ENCODE measurements at regions of chr1 and their contacts with region 1.

Region 1: GRCh38 chr1:23979878-23980724 is at the start of gene SRSF10:
- DNase-seq: peak; percentile 88 to 96
- H3K4me3 ChIP-seq: peak within 1 kb of the TSS; percentile 94
- H3K27ac ChIP-seq: peak within 1 kb of the TSS; percentile 97
- H3K4me1 ChIP-seq: peaks cover 45% of the 10 kb centered on the region
- H3K27me3 ChIP-seq: no peaks in the 10 kb centered on the region
- CTCF ChIP-seq: no peak
- total RNA-seq, gene SRSF10: 77.3 and 96.2 TPM in 2 replicates

Region 2: GRCh38 chr1:22995774-22996173 is 984.3 kb before region 1 on chr1:
- CTCF ChIA-PET with region 1: no interaction called
- POLR2A ChIA-PET with region 1: interaction called, 47 read pairs
- intact Hi-C with region 1: no loop called
- DNase-seq: no peak
- H3K4me3 ChIP-seq: no peak overlapping the region
- H3K27ac ChIP-seq: peak overlapping the region; percentile 93; the same call in 1 of the 2 replicates
- H3K4me1 ChIP-seq: peaks cover 37% of the 10 kb centered on the region
- H3K27me3 ChIP-seq: no peaks in the 10 kb centered on the region
- CTCF ChIP-seq: no peak

Region 3: DNA sequence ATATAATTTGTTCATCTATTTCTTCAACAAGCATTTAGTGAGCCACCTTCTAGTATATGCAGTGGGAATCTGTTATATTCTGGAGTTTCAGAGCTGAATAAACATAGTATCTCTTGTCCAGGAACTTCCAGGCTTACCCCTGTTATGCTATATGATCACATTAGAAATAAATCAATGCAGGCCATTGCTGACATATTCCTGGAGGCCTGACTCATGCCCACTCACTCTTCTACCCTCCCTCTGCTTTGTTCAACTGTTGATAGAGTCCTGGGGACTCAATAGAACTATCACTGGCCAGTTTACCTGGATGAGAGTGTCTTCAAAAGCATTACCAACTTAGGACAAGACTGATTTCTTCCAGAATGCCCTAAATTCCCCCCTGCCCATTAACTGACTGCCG is 29.3 kb after region 1 on chr1:
- CTCF ChIA-PET with region 1: interaction called, 3 read pairs
- POLR2A ChIA-PET with region 1: no interaction called
- intact Hi-C with region 1: loop called (anchors 2 kb)
- DNase-seq: peak; percentile 53 to 85
- H3K4me3 ChIP-seq: no peak overlapping the region
- H3K27ac ChIP-seq: no peak overlapping the region
- H3K4me1 ChIP-seq: peaks cover 23% of the 10 kb centered on the region
- H3K27me3 ChIP-seq: no peaks in the 10 kb centered on the region
- CTCF ChIP-seq: no peak

Region 4: GRCh38 chr1:24018611-24019580 is 38.8 kb after region 1 on chr1:
- CTCF ChIA-PET with region 1: interaction called, 3 read pairs
- POLR2A ChIA-PET with region 1: no interaction called
- intact Hi-C with region 1: loop called (anchors 2 kb)
- DNase-seq: peak; percentile 93 to 95
- H3K4me3 ChIP-seq: peak overlapping the region; percentile 26; the same call in 1 of the 2 replicates
- H3K27ac ChIP-seq: peak overlapping the region; percentile 95
- H3K4me1 ChIP-seq: peaks cover 55% of the 10 kb centered on the region
- H3K27me3 ChIP-seq: no peaks in the 10 kb centered on the region
- CTCF ChIP-seq: no peak

Region 5: GRCh38 chr1:24036088-24036487 is 56.0 kb after region 1 on chr1:
- CTCF ChIA-PET with region 1: no interaction called
- POLR2A ChIA-PET with region 1: no interaction called
- intact Hi-C with region 1: no loop called
- DNase-seq: no peak
- H3K4me3 ChIP-seq: no peak overlapping the region
- H3K27ac ChIP-seq: no peak overlapping the region
- H3K4me1 ChIP-seq: no peaks in the 10 kb centered on the region
- H3K27me3 ChIP-seq: no peaks in the 10 kb centered on the region
- CTCF ChIP-seq: no peak

Region 6: GRCh38 chr1:24642481-24643361 is 662.6 kb after region 1 on chr1 and contains the start of gene SRRM1:
- CTCF ChIA-PET with region 1: no interaction called
- POLR2A ChIA-PET with region 1: no interaction called
- intact Hi-C with region 1: no loop called
- DNase-seq: peak; percentile 94 to 97
- H3K4me3 ChIP-seq: peak within 1 kb of the TSS; percentile 70
- H3K27ac ChIP-seq: peak within 1 kb of the TSS; percentile 96
- H3K4me1 ChIP-seq: peaks cover 15% of the 10 kb centered on the region
- H3K27me3 ChIP-seq: no peaks in the 10 kb centered on the region
- CTCF ChIP-seq: no peak
- total RNA-seq, gene SRRM1: 111 and 124 TPM in 2 replicates